Uterus (tissue), 4 donors: ENCODE measurements at regions of chr10 and their contacts with region 1.

Region 1: DNA sequence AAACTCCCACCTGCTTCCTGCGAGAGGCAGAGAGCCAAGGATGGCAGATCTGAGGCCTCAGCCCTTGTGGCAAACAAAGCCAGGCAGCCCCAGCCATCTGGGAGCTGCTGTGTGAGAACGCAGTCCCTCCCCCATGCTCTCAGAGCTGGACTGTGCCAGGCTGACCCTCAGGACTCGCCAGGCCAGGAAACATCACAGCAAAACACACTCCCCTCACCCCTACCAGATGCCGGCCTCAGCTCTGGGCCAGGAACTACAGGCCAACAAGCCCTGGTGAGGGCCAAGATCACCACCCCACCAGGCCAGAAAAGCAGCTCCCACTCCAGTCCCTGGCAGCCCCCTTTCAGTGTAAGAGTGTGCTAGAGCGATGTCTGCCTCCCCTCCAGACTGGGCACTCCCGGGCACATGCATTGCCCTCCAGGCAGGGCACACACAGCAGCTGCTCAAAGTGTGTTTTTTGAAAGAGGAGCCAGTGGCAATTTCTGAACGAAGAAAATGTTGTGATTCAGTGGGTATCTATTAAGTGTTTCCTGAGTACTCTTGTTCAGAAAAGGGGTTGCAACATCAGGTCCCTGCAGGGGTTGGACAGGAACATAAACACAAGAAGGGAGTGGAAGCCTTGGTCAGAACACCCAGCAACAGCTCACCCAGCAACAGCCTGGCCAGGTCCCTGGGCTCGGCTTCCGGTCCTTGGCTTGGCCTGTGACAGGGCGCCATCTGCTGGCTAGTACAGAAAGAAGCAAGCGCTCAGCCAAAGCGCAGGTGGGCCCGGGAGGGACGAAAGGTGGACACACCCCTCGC is 18.3 kb downstream of the LRRC20 start:
- DNase-seq: peak; percentile 92 to 97
- H3K4me3 ChIP-seq: peak overlapping the region in 1 of 2 donors; percentile 10
- H3K27ac ChIP-seq: peak overlapping the region; percentile 88 to 95
- H3K4me1 ChIP-seq: peaks cover 0 to 9% of the 10 kb centered on the region in 2 donors
- H3K27me3 ChIP-seq: no peaks in the 10 kb centered on the region
- CTCF ChIP-seq: peak; percentile 90 to 99 (median 98)
- POLR2A ChIP-seq: peak in 1 of 2 donors; percentile 29

Region 2: GRCh38 chr10:70223728-70224127 is 140.4 kb before region 1 on chr10:
- intact Hi-C with region 1: loop called (anchors 2 kb)
- DNase-seq: no peak
- H3K4me3 ChIP-seq: no peak overlapping the region
- H3K27ac ChIP-seq: peak overlapping the region; percentile 12 to 22
- H3K4me1 ChIP-seq: no peaks in the 10 kb centered on the region
- H3K27me3 ChIP-seq: no peaks in the 10 kb centered on the region
- CTCF ChIP-seq: no peak
- POLR2A ChIP-seq: no peak